ENCODE measurements at regions of chr16 and their contacts with region 1.

Region 1: GRCh38 chr16:68704232-68704867 is 32.7 kb upstream of the CDH1 start:
- DNase-seq: peak; percentile 59
- H3K4me3 ChIP-seq: no peak overlapping the region
- H3K27ac ChIP-seq: no peak overlapping the region
- H3K4me1 ChIP-seq: no peaks in the 10 kb centered on the region
- CTCF ChIP-seq: peak; percentile 82

Region 2: DNA sequence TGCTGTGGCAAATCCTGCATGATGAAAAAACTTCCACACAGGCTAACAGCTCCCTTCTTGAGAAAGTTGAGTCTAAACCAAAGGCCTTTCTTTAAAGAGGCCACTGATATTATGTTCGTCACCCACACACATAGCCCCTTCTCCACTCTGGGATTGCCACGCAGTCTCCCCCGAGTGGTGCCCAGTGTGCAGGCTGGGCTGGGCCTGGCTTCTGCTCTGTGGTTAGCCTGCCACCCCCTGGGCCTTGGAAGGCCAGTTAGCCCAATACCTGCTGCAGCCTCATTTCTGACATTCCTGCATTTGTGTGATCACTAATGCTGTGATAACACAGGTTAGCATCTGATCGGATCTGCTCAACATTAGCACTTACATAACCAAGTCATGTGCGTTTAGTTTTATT is 14.4 kb before region 1 on chr16:
- CTCF ChIA-PET with region 1: no interaction called
- POLR2A ChIA-PET with region 1: no interaction called
- intact Hi-C with region 1: no loop called
- DNase-seq: no peak
- H3K4me3 ChIP-seq: no peak overlapping the region
- H3K27ac ChIP-seq: no peak overlapping the region
- H3K4me1 ChIP-seq: no peaks in the 10 kb centered on the region
- CTCF ChIP-seq: no peak

Region 3: DNA sequence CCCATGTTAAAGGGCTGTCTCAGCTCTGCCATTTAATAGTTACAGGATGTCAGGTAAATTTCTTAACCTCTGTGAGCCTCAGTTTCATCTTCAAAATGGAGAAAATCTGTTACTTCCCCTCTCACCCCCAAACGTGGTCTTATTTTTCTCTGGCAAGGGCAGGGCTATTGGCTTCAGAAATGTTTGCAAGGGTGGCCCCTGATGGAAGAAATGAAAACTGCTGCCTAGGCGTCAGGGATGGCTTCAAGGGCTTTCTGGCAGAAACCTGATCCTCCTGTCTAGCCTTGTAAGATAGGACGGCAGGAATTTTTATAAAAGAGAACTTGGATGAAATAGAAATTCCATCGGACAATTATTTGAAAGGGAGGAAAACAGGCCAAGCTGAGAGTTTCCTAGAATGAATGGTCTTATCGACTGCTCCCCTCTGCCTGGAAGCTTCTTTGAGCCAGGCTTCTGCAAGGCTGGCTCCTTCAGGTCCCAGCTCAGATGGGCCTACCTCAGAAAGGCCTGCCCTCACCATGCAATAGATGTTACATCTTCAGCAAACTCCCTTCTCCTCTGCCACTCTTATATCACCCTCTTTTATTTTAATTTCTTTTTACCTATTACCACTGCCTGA is 96.0 kb after region 1 on chr16:
- CTCF ChIA-PET with region 1: no interaction called
- POLR2A ChIA-PET with region 1: no interaction called
- intact Hi-C with region 1: loop called (anchors 1 kb)
- DNase-seq: peak; percentile 64
- H3K4me3 ChIP-seq: no peak overlapping the region
- H3K27ac ChIP-seq: no peak overlapping the region
- H3K4me1 ChIP-seq: no peaks in the 10 kb centered on the region
- CTCF ChIP-seq: peak; percentile 86